ENCODE measurements at regions of chr5 and their contacts with region 1.

Region 1: GRCh38 chr5:93208141-93208751 is 372.8 kb downstream of the NR2F1-AS1 start:
- DNase-seq: no peak
- ATAC-seq: no peak
- H3K4me3 ChIP-seq: no peak overlapping the region
- H3K4me3 Mint-ChIP-seq: no peak overlapping the region
- H3K27ac ChIP-seq: no peak overlapping the region
- H3K27ac Mint-ChIP-seq: no peak overlapping the region
- H3K4me1 ChIP-seq: no peaks in the 10 kb centered on the region
- H3K4me1 Mint-ChIP-seq: no peaks in the 10 kb centered on the region
- H3K27me3 ChIP-seq: no peaks in the 10 kb centered on the region
- H3K27me3 Mint-ChIP-seq: peaks cover 0 to 6% (median 0%) of the 10 kb centered on the region in 5 donors

Region 2: GRCh38 chr5:93225748-93226147 is 17.5 kb after region 1 on chr5:
- CTCF ChIA-PET with region 1: no interaction called
- POLR2A ChIA-PET with region 1: no interaction called
- intact Hi-C with region 1: loop called in 1 of 2 experiments (anchors 1 kb)
- DNase-seq: no peak
- ATAC-seq: no peak
- H3K4me3 ChIP-seq: no peak overlapping the region
- H3K4me3 Mint-ChIP-seq: no peak overlapping the region
- H3K27ac ChIP-seq: no peak overlapping the region
- H3K27ac Mint-ChIP-seq: no peak overlapping the region
- H3K4me1 ChIP-seq: no peaks in the 10 kb centered on the region
- H3K4me1 Mint-ChIP-seq: no peaks in the 10 kb centered on the region
- H3K27me3 ChIP-seq: no peaks in the 10 kb centered on the region
- H3K27me3 Mint-ChIP-seq: peaks cover 0 to 2% (median 0%) of the 10 kb centered on the region in 5 donors

Region 3: GRCh38 chr5:93342563-93343061 is 134.4 kb after region 1 on chr5:
- CTCF ChIA-PET with region 1: no interaction called
- POLR2A ChIA-PET with region 1: no interaction called
- intact Hi-C with region 1: no loop called
- DNase-seq: no peak
- ATAC-seq: no peak
- H3K4me3 ChIP-seq: no peak overlapping the region
- H3K4me3 Mint-ChIP-seq: no peak overlapping the region
- H3K27ac ChIP-seq: no peak overlapping the region
- H3K27ac Mint-ChIP-seq: no peak overlapping the region
- H3K4me1 ChIP-seq: no peaks in the 10 kb centered on the region
- H3K4me1 Mint-ChIP-seq: no peaks in the 10 kb centered on the region
- H3K27me3 ChIP-seq: no peaks in the 10 kb centered on the region
- H3K27me3 Mint-ChIP-seq: peaks cover 0 to 4% (median 0%) of the 10 kb centered on the region in 5 donors